ENCODE measurements at regions of chr13 and their contacts with region 1.

Region 1: DNA sequence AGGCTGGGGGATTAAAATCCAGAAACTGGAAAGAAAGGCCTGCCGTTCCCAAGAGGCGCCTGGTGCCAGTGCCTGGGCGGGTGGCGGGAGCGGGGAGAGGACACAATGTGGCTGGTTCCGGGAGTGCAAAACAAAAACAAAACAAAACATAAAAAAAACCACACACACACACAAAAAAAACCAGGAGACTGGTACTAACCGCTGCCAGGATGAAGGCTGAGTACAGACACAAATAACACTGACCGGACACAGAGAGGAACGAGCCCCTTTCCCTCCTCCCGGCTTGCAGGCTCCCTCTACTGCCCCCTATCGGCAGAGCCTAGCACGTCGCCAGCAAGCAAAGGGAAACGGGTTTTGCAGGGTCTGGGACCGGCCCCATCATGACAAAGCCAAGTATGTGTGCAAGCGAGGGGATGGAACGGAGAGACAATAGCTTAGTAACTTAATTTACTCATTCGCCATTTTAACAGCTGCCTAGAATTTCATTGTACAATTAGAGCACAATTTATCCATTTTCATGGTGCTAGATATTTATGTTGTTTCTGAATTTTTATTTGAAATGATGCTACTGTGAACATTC is 17.9 kb upstream of the ZDHHC20 start:
- DNase-seq: peak; percentile 55 to 87 (median 80)
- ATAC-seq: peak; percentile 87
- H3K4me3 ChIP-seq: peak overlapping the region; percentile 24 to 40
- H3K4me3 Mint-ChIP-seq: peak overlapping the region; percentile 81
- H3K27ac ChIP-seq: no peak overlapping the region
- H3K27ac Mint-ChIP-seq: no peak overlapping the region
- H3K4me1 ChIP-seq: peaks cover 11% of the 10 kb centered on the region
- H3K4me1 Mint-ChIP-seq: peaks cover 19% of the 10 kb centered on the region
- H3K27me3 ChIP-seq: no peaks in the 10 kb centered on the region
- H3K27me3 Mint-ChIP-seq: peaks cover 2% of the 10 kb centered on the region
- CTCF ChIP-seq: peak; percentile 96

Region 2: GRCh38 chr13:20713751-20714150 is 763.2 kb before region 1 on chr13:
- CTCF ChIA-PET with region 1: no interaction called
- POLR2A ChIA-PET with region 1: no interaction called
- intact Hi-C with region 1: loop called in 1 of 2 experiments (anchors 2 kb)
- DNase-seq: no peak
- ATAC-seq: no peak
- H3K4me3 ChIP-seq: no peak overlapping the region
- H3K4me3 Mint-ChIP-seq: no peak overlapping the region
- H3K27ac ChIP-seq: no peak overlapping the region
- H3K27ac Mint-ChIP-seq: no peak overlapping the region
- H3K4me1 ChIP-seq: peaks cover 4% of the 10 kb centered on the region
- H3K4me1 Mint-ChIP-seq: peaks cover 8% of the 10 kb centered on the region
- H3K27me3 ChIP-seq: no peaks in the 10 kb centered on the region
- H3K27me3 Mint-ChIP-seq: peaks cover 2% of the 10 kb centered on the region
- CTCF ChIP-seq: no peak

Region 3: DNA sequence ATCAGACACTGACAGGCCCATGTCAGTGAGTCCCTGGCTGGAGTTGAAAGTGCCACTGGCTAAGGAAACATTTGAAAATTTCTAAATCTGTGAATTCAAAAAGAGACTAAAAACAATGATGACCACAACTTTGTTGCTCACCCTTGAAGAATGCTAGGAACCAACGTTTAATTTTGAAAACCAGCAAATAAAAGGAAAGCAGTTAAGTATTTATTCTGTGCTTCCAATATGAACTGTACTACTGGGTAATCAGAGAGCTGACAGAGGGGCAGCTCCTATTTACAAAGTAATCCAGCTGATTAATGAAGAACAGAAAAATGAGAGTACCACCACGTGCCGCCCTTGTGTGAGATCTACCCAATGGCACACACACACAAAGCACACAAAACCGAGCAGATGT is 370.9 kb before region 1 on chr13:
- CTCF ChIA-PET with region 1: interaction called, 100 read pairs
- POLR2A ChIA-PET with region 1: no interaction called
- intact Hi-C with region 1: loop called (anchors 1 kb)
- DNase-seq: no peak
- ATAC-seq: no peak
- H3K4me3 ChIP-seq: no peak overlapping the region
- H3K4me3 Mint-ChIP-seq: no peak overlapping the region
- H3K27ac ChIP-seq: no peak overlapping the region
- H3K27ac Mint-ChIP-seq: no peak overlapping the region
- H3K4me1 ChIP-seq: no peaks in the 10 kb centered on the region
- H3K4me1 Mint-ChIP-seq: peaks cover 2% of the 10 kb centered on the region
- H3K27me3 ChIP-seq: no peaks in the 10 kb centered on the region
- H3K27me3 Mint-ChIP-seq: peaks cover 2% of the 10 kb centered on the region
- CTCF ChIP-seq: no peak

Region 4: GRCh38 chr13:21240586-21240985 is 236.4 kb before region 1 on chr13:
- CTCF ChIA-PET with region 1: interaction called, 13 read pairs
- POLR2A ChIA-PET with region 1: no interaction called
- intact Hi-C with region 1: no loop called
- DNase-seq: no peak
- ATAC-seq: no peak
- H3K4me3 ChIP-seq: no peak overlapping the region
- H3K4me3 Mint-ChIP-seq: no peak overlapping the region
- H3K27ac ChIP-seq: no peak overlapping the region
- H3K27ac Mint-ChIP-seq: no peak overlapping the region
- H3K4me1 ChIP-seq: no peaks in the 10 kb centered on the region
- H3K4me1 Mint-ChIP-seq: peaks cover 3% of the 10 kb centered on the region
- H3K27me3 ChIP-seq: no peaks in the 10 kb centered on the region
- H3K27me3 Mint-ChIP-seq: peaks cover 2% of the 10 kb centered on the region
- CTCF ChIP-seq: no peak

Region 5: GRCh38 chr13:21501686-21502085 is 24.7 kb after region 1 on chr13:
- CTCF ChIA-PET with region 1: interaction called, 11 read pairs
- POLR2A ChIA-PET with region 1: no interaction called
- intact Hi-C with region 1: no loop called
- DNase-seq: no peak
- ATAC-seq: no peak
- H3K4me3 ChIP-seq: no peak overlapping the region
- H3K4me3 Mint-ChIP-seq: no peak overlapping the region
- H3K27ac ChIP-seq: no peak overlapping the region
- H3K27ac Mint-ChIP-seq: peak overlapping the region; percentile 3
- H3K4me1 ChIP-seq: no peaks in the 10 kb centered on the region
- H3K4me1 Mint-ChIP-seq: no peaks in the 10 kb centered on the region
- H3K27me3 ChIP-seq: no peaks in the 10 kb centered on the region
- H3K27me3 Mint-ChIP-seq: no peaks in the 10 kb centered on the region
- CTCF ChIP-seq: no peak